ENCODE measurements at regions of chr1 and their contacts with region 1.

Region 1: GRCh38 chr1:109041621-109042468 is at the start of gene WDR47:
- DNase-seq: peak; percentile 84
- H3K4me3 ChIP-seq: peak within 1 kb of the TSS; percentile 90
- H3K27ac ChIP-seq: peak within 1 kb of the TSS; percentile 65
- H3K27me3 ChIP-seq: no peaks in the 10 kb centered on the region
- CTCF ChIP-seq: no peak
- polyA plus RNA-seq, gene WDR47: 14.6 and 23.1 TPM in 2 replicates

Region 2: GRCh38 chr1:109027841-109028240 is 14.0 kb before region 1 on chr1:
- CTCF ChIA-PET with region 1: interaction called, 11 read pairs
- POLR2A ChIA-PET with region 1: interaction called, 7 read pairs
- DNase-seq: no peak
- H3K4me3 ChIP-seq: no peak overlapping the region
- H3K27ac ChIP-seq: no peak overlapping the region
- H3K27me3 ChIP-seq: no peaks in the 10 kb centered on the region
- CTCF ChIP-seq: no peak

Region 3: DNA sequence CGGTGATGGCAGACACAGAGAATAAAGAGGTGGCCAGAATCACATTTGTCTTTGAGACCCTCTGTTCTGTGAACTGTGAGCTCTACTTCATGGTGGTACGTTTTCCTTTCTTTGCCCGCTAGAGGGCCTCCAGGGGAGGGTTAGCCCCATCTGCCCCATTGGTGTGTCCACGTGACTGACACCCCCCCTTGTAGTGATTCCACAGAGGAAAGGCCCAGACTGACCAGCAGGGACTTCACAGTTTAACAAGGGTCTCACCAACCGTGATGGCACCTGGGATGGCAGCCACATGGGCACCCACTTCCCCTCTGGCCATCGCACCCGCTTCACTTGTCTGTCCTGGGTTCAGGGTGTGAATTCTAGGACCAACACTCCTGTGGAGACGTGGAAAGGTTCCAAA is 149.5 kb after region 1 on chr1:
- CTCF ChIA-PET with region 1: no interaction called
- POLR2A ChIA-PET with region 1: no interaction called
- DNase-seq: no peak
- H3K4me3 ChIP-seq: no peak overlapping the region
- H3K27ac ChIP-seq: no peak overlapping the region
- H3K27me3 ChIP-seq: no peaks in the 10 kb centered on the region
- CTCF ChIP-seq: no peak

Region 4: DNA sequence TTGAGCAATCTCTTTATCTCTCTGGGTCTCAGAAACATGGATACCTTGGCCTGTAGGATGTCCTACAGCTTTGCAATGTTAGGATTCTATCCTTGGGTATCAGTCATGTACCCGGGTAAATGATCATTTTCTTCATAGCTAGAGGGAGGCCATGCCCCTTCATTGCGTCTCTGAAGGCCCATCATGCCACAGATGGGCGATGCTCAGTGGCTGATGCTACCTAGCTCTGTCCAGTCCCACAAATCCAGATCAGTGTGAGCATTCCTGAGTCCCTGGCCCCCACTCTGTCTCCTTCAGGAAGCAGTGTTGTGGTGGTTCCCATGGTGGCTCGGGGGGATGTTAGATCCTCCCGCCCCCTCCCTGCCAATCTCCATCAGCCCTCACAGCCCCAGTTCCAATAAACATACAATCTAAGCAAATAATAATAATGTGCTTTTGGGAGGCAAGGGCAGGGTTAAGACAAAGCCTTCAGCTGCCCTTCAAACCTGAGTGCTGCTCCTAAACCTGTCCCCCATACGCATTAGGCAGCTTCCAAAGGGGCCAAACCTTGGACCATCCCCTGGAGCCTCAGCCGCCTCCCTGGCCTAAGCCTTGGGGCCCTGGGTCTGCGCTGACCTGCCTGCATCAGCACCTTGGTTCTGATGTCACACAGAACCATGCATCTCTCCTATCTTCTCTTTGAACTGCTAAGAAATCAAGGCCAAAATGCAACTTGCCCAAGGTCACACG is 497.1 kb after region 1 on chr1:
- CTCF ChIA-PET with region 1: no interaction called
- POLR2A ChIA-PET with region 1: no interaction called
- DNase-seq: no peak
- H3K4me3 ChIP-seq: no peak overlapping the region
- H3K27ac ChIP-seq: no peak overlapping the region
- H3K27me3 ChIP-seq: peaks cover 15% of the 10 kb centered on the region
- CTCF ChIP-seq: no peak